Sigmoid colon (tissue), 7 donors: ENCODE measurements at regions of chr3 and their contacts with region 1.

Region 1: DNA sequence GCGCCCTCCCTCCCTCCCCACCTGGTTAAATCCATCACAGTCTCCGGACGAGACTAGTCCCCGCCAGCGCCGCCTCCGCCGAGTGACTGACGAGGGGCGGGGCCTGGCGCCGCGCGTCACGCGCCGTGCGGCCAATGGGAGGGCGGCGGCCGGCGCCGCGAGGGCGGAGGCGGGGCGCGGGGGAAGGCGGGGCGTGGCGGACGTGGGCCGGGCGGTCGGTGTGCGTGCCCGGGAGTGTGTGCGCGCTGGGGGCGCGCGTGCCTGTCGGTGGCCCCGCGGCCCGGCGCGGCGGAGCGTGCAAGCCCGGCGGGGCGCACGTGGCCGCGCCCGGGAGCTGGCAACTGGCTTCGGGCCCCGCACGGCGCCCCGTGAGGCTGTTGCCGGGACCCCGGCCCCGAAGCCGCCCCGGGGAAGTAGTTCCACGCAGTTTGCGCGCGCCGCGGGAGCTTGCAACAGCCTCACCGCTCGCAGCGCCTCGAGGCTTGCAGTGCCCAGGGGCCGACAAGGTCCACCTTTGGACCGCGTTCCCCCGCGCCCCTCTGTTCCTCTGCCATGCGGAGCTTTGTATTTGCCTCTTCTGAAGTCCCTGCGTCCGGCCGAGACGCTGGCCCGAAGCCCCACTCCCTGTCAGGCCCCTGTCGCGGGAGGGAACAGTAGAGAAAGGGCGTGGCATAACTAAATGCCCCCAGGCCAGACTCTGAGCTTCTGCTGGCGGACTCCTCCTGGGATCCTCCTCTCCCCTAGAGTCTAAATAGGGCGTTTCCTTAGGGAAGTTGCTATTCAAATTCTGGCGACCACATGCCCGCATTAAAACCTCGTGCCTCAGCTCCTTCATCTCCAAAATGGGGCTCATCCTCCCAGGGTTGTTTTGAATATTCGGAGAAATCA is 400.9 kb downstream of the SHQ1 start:
- DNase-seq: peak; percentile 96
- H3K4me3 ChIP-seq: peak overlapping the region; percentile 63 to 92 (median 88)
- H3K27ac ChIP-seq: peak overlapping the region; percentile 85 to 96 (median 92)
- H3K4me1 ChIP-seq: peaks cover 0 to 34% (median 22%) of the 10 kb centered on the region in 4 donors
- H3K27me3 ChIP-seq: no peaks in the 10 kb centered on the region
- CTCF ChIP-seq: no peak
- EP300 ChIP-seq: no peak
- POLR2A ChIP-seq: no peak

Region 2: GRCh38 chr3:71955240-71956068 is 491.8 kb before region 1 on chr3:
- intact Hi-C with region 1: loop called (anchors 5 kb)
- DNase-seq: peak; percentile 82
- H3K4me3 ChIP-seq: no peak overlapping the region
- H3K27ac ChIP-seq: no peak overlapping the region
- H3K4me1 ChIP-seq: peaks cover 0 to 12% (median 9%) of the 10 kb centered on the region in 4 donors
- H3K27me3 ChIP-seq: no peaks in the 10 kb centered on the region
- CTCF ChIP-seq: peak in 3 of 4 experiments; percentile 51 to 79 (median 65)
- EP300 ChIP-seq: no peak
- POLR2A ChIP-seq: no peak

Region 3: GRCh38 chr3:72041511-72041910 is 405.8 kb before region 1 on chr3:
- intact Hi-C with region 1: loop called (anchors 10 kb)
- DNase-seq: peak; percentile 76
- H3K4me3 ChIP-seq: no peak overlapping the region
- H3K27ac ChIP-seq: peak overlapping the region in 2 of 4 donors; percentile 23 to 25
- H3K4me1 ChIP-seq: peaks cover 0 to 27% (median 25%) of the 10 kb centered on the region in 4 donors
- H3K27me3 ChIP-seq: no peaks in the 10 kb centered on the region
- CTCF ChIP-seq: peak in 2 of 4 experiments; percentile 11 to 22
- EP300 ChIP-seq: no peak
- POLR2A ChIP-seq: no peak

Region 4: DNA sequence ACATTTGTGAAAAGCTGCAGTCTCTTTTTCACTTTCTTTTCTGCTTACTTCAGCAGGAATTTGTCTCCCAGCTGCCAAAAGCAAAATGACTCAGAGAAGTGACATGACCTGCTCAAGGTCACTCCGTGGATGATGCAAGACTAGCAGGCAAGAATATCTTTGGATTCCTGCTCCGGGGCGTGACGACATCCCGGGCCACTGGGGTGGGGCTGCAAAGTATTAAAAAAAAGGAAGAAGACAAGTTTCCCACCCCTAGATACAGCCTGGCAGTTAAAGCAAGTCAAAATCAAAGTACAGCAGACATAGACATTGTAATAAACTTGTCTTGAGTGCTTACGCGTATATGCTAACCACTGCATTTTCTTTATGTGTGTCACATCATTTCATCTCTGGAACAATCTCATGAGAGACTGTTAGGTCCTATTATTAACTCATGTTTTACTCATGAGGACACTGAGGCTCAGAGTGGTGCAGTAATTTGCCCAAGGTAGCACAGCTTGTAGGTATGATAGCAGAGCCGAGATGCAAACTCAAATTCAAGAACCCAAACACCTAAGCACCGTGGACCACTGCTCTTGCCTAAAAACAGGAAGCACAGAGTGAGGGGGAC is 177.1 kb before region 1 on chr3:
- intact Hi-C with region 1: loop called (anchors 10 kb)
- DNase-seq: peak; percentile 95
- H3K4me3 ChIP-seq: no peak overlapping the region
- H3K27ac ChIP-seq: peak overlapping the region in 3 of 4 donors; percentile 16 to 47 (median 45)
- H3K4me1 ChIP-seq: peaks cover 0 to 44% (median 39%) of the 10 kb centered on the region in 4 donors
- H3K27me3 ChIP-seq: no peaks in the 10 kb centered on the region
- CTCF ChIP-seq: no peak
- EP300 ChIP-seq: peak in 2 of 4 donors; percentile 54 to 70
- POLR2A ChIP-seq: no peak

Region 5: DNA sequence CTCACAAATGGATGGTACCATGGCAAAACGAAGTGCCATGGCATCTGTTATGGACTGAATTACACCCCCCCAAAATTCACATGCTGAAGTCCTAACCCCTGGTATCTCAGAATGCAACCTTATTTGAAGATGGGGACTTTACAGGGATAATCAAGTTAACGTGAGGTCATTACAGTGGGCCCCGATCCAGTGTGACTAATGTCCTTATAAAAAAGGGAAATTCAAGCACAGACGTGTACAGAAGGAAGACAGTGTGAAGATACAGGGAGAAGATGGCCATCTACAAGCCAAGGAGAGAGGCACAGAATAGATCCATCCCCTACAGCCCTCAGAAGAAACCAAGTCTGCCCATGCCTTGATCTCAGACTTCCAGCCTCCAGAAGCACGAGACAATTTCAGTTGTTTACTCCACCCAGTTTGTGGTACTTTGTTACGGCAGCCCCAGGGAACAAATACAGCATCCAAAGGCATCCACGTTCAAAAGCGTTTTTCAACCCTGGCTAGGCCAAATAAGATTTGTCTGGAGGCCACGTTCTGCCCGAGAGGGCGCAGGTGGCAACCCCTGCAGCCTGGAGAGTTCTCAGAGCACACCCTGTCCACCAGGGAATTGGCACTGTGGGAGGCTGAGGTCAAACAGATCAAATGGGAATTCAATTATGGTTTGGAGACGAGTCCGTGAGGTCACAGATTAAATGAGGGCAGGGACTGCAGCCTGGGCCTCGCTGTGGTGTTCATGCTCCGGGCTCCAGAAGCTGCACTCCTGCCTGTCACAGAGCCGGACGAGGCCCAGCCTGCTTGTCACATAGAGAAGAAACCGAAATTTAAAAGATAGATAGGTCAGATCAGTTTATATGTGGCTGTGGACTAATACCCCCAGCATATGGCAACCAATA is 93.8 kb before region 1 on chr3:
- intact Hi-C with region 1: loop called (anchors 2 kb)
- DNase-seq: no peak
- H3K4me3 ChIP-seq: no peak overlapping the region
- H3K27ac ChIP-seq: no peak overlapping the region
- H3K4me1 ChIP-seq: no peaks in the 10 kb centered on the region
- H3K27me3 ChIP-seq: no peaks in the 10 kb centered on the region
- CTCF ChIP-seq: no peak
- EP300 ChIP-seq: no peak
- POLR2A ChIP-seq: no peak